IMR-90 (cell line): ENCODE measurements at regions of chr5 and their contacts with region 1.

Region 1: GRCh38 chr5:43105369-43106289 is 15.1 kb upstream of the ZNF131 start:
- DNase-seq: peak; percentile 96
- ATAC-seq: peak; percentile 94
- H3K4me3 ChIP-seq: peak overlapping the region; percentile 40
- H3K27ac ChIP-seq: peak overlapping the region; percentile 66
- H3K4me1 ChIP-seq: peaks cover 1% of the 10 kb centered on the region; the same call in 1 of the 2 replicates
- H3K27me3 ChIP-seq: no peaks in the 10 kb centered on the region
- CTCF ChIP-seq: peak; percentile 100; the same call in 1 of the 2 replicates
- POLR2A ChIP-seq: no peak
- RAD21 ChIP-seq: peak; percentile 83

Region 2: GRCh38 chr5:43040287-43041098 is 65.1 kb before region 1 on chr5 and contains the start of gene ANXA2R:
- CTCF ChIA-PET with region 1: no interaction called
- POLR2A ChIA-PET with region 1: no interaction called
- dilution Hi-C with region 1: no loop called
- in situ Hi-C with region 1: no loop called
- intact Hi-C with region 1: loop called (anchors 2 kb)
- DNase-seq: peak; percentile 97
- ATAC-seq: peak; percentile 52
- H3K4me3 ChIP-seq: peak within 1 kb of the TSS; percentile 95
- H3K27ac ChIP-seq: peak within 1 kb of the TSS; percentile 88
- H3K4me1 ChIP-seq: peaks cover 6% of the 10 kb centered on the region
- H3K27me3 ChIP-seq: no peaks in the 10 kb centered on the region
- CTCF ChIP-seq: peak; percentile 84
- POLR2A ChIP-seq: no peak
- RAD21 ChIP-seq: peak; percentile 76
- total RNA-seq, gene ANXA2R: 1.3 and 1.4 TPM in 2 replicates

Region 3: DNA sequence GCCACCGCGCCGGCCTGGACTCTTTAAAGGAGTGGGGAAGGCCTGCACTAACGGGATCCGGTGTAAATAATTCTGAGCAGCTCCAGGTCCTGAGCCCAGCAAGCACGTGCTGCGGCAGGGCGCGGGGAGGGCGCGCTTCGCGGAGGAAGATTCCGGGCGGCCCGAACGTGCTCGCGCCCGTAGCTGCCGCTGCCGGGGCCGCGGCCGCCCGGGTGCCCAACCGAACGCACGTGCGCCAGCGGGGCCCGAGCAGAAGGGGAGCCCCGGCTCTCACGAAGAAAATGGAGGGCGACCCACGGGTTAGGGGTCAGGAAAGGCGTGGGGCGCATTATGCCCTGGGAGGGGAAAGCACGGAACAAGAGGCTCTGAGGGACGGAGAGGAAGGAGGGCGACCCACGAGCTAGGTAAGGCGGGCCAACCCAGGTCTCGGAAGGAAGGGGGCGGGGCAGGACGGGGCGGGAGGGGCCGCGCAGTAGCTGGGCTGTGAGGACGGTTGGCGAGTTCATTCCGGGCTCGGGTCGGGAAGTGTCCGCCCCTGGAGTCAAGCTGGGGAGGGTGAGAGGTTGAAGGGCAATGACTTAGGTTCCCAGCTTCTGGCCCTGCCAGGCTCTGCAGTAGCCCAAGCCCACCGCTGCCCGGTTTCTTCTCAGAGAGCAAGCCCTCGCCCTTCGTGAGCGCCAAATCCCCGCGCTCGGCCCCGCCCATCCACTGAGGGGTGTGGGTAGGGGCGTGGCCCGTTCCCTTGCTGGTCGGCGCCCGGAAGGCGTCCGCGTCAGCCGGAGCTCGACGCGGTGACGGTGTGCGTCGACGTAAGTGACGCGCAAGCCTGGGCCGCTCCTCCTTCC is 15.3 kb after region 1 on chr5 and contains the start of gene ZNF131:
- CTCF ChIA-PET with region 1: interaction called, 22 read pairs
- POLR2A ChIA-PET with region 1: interaction called, 7 read pairs
- dilution Hi-C with region 1: no loop called
- in situ Hi-C with region 1: no loop called
- intact Hi-C with region 1: no loop called
- DNase-seq: peak; percentile 98
- ATAC-seq: peak; percentile 96
- H3K4me3 ChIP-seq: peak within 1 kb of the TSS; percentile 60
- H3K27ac ChIP-seq: peak within 1 kb of the TSS; percentile 86
- H3K4me1 ChIP-seq: 0 out of 2 replicates have a peak, but pooled peaks cover 2% of the 10 kb centered on the region
- H3K27me3 ChIP-seq: no peaks in the 10 kb centered on the region
- CTCF ChIP-seq: no peak
- POLR2A ChIP-seq: peak; percentile 75; the same call in 1 of the 2 replicates
- RAD21 ChIP-seq: no peak
- total RNA-seq, gene ZNF131: 36.2 and 47.8 TPM in 2 replicates

Region 4: GRCh38 chr5:43313035-43313853 is 207.6 kb after region 1 on chr5 and contains the start of gene HMGCS1:
- CTCF ChIA-PET with region 1: no interaction called
- POLR2A ChIA-PET with region 1: no interaction called
- dilution Hi-C with region 1: no loop called
- in situ Hi-C with region 1: loop called (anchors 25 kb)
- intact Hi-C with region 1: no loop called
- DNase-seq: peak; percentile 100
- ATAC-seq: peak; percentile 97
- H3K4me3 ChIP-seq: peak within 1 kb of the TSS; percentile 69
- H3K27ac ChIP-seq: peak within 1 kb of the TSS; percentile 72
- H3K4me1 ChIP-seq: peaks cover 2% of the 10 kb centered on the region; the same call in 1 of the 2 replicates
- H3K27me3 ChIP-seq: no peaks in the 10 kb centered on the region
- CTCF ChIP-seq: 0 out of 2 replicates have a peak, but pooled peaks have one; percentile 2
- POLR2A ChIP-seq: peak; percentile 97
- RAD21 ChIP-seq: no peak
- total RNA-seq, gene HMGCS1: 30.6 and 32.8 TPM in 2 replicates